B cell (primary cell): ENCODE measurements at regions of chr13 and their contacts with region 1.

Region 1: DNA sequence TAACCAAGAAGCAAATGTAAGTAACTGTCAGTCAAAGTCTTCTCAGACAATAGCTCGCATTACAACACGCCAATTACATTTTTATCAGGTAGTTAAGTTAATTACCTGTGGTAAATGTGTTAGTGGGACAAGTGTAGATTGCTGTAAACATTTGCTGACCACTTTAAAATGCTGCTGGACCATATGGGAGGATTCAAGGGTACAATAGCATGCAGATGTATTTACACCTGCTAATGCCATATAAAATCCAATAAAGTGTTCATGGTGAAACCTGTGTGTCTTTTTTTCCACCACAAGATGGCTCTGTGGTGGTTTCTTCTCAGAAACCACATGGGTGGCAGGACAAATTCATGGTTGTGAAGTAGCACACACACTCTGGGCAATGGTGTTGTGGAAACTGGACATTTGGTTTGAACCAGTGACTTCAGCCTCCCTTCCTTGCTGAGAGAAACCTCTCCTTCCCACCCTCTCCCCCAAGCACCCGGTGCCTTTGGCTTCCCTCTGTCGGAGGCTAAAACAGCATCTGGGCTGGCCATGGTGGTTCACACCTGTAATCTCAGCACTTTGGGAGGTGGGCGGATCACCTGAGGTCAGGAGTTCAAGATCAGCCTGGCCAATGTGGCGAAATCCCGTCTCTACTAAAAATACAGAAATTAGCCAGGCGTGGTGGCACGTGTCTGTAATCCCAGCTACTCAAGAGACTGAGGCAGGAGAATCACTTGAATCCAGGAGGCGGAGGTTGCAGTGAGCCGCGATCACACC is 18.1 kb upstream of the GTF3A start:
- DNase-seq: peak; percentile 69
- ATAC-seq: peak; percentile 57
- H3K4me3 ChIP-seq: no peak overlapping the region
- H3K4me3 Mint-ChIP-seq: no peak overlapping the region
- H3K27ac ChIP-seq: no peak overlapping the region
- H3K27ac Mint-ChIP-seq: no peak overlapping the region
- H3K4me1 ChIP-seq: peaks cover 7% of the 10 kb centered on the region in 2 donors
- H3K4me1 Mint-ChIP-seq: peaks cover 7% of the 10 kb centered on the region
- H3K27me3 ChIP-seq: peaks cover 0 to 3% (median 0%) of the 10 kb centered on the region in 4 experiments
- H3K27me3 Mint-ChIP-seq: peaks cover 33% of the 10 kb centered on the region
- CTCF ChIP-seq: peak; percentile 68

Region 2: GRCh38 chr13:27533155-27533643 is 126.8 kb after region 1 on chr13:
- CTCF ChIA-PET with region 1: interaction called, 5 read pairs
- POLR2A ChIA-PET with region 1: no interaction called
- intact Hi-C with region 1: loop called (anchors 2 kb)
- DNase-seq: peak; percentile 57
- ATAC-seq: peak; percentile 70
- H3K4me3 ChIP-seq: peak overlapping the region in 3 of 5 experiments; percentile 16 to 44 (median 17)
- H3K4me3 Mint-ChIP-seq: peak overlapping the region; percentile 69
- H3K27ac ChIP-seq: no peak overlapping the region
- H3K27ac Mint-ChIP-seq: no peak overlapping the region
- H3K4me1 ChIP-seq: peaks cover 9 to 15% of the 10 kb centered on the region in 2 donors
- H3K4me1 Mint-ChIP-seq: peaks cover 26% of the 10 kb centered on the region
- H3K27me3 ChIP-seq: no peaks in the 10 kb centered on the region
- H3K27me3 Mint-ChIP-seq: no peaks in the 10 kb centered on the region
- CTCF ChIP-seq: peak; percentile 73

Region 3: DNA sequence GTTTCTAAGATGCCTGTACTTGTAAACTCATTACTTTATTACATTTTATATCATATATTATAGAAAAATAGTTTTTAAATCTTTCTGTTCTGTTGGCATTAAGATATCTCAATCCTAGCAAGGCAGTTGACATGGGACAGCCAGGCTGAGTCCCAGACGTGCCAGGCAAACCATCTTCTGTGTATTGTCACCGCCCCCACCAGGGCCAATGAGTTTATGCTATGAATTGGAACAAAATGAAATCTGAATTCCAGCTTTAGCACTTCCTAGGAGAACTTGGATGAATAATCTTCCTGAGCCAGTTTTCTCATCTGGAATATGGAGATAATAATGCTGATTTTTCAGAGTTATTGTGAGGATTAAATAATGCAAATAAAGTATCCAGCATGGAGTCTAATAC is 306.1 kb after region 1 on chr13:
- CTCF ChIA-PET with region 1: interaction called, 7 read pairs
- POLR2A ChIA-PET with region 1: no interaction called
- intact Hi-C with region 1: loop called (anchors 2 kb)
- DNase-seq: peak; percentile 7
- ATAC-seq: peak; percentile 49
- H3K4me3 ChIP-seq: no peak overlapping the region
- H3K4me3 Mint-ChIP-seq: no peak overlapping the region
- H3K27ac ChIP-seq: no peak overlapping the region
- H3K27ac Mint-ChIP-seq: no peak overlapping the region
- H3K4me1 ChIP-seq: no peaks in the 10 kb centered on the region
- H3K4me1 Mint-ChIP-seq: no peaks in the 10 kb centered on the region
- H3K27me3 ChIP-seq: peaks cover 0 to 10% (median 5%) of the 10 kb centered on the region in 4 experiments
- H3K27me3 Mint-ChIP-seq: peaks cover 19% of the 10 kb centered on the region
- CTCF ChIP-seq: peak; percentile 44

Region 4: DNA sequence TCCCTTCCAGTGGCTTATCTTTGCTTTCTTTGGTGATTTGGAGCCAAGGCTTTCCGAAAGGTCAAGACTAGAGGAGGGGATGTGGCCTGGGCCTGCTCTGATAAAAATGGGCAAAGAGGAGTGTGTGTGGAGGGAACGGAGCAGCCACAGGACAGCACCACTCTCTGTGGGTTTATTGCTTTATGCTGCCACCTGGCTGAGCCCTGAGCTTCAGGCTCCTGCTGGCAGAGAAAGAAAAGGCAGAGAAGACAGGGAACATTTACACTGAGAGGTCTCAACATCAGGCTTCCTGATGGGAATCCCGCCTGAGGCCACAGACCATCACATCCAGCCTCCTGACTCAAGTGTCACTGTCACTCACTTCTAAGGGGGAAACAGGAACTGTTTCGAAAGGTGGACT is 376.8 kb after region 1 on chr13:
- CTCF ChIA-PET with region 1: interaction called, 3 read pairs
- POLR2A ChIA-PET with region 1: no interaction called
- intact Hi-C with region 1: loop called (anchors 1 kb)
- DNase-seq: no peak
- ATAC-seq: no peak
- H3K4me3 ChIP-seq: no peak overlapping the region
- H3K4me3 Mint-ChIP-seq: no peak overlapping the region
- H3K27ac ChIP-seq: no peak overlapping the region
- H3K27ac Mint-ChIP-seq: no peak overlapping the region
- H3K4me1 ChIP-seq: no peaks in the 10 kb centered on the region
- H3K4me1 Mint-ChIP-seq: no peaks in the 10 kb centered on the region
- H3K27me3 ChIP-seq: peaks cover 0 to 19% (median 7%) of the 10 kb centered on the region in 4 experiments
- H3K27me3 Mint-ChIP-seq: peaks cover 50% of the 10 kb centered on the region
- CTCF ChIP-seq: no peak